Activated CD4-positive, alpha-beta T cell treated with anti-CD3 and anti-CD28 coated beads for 36 hours (primary cell): ENCODE measurements at regions of chr11 and their contacts with region 1.

Region 1: DNA sequence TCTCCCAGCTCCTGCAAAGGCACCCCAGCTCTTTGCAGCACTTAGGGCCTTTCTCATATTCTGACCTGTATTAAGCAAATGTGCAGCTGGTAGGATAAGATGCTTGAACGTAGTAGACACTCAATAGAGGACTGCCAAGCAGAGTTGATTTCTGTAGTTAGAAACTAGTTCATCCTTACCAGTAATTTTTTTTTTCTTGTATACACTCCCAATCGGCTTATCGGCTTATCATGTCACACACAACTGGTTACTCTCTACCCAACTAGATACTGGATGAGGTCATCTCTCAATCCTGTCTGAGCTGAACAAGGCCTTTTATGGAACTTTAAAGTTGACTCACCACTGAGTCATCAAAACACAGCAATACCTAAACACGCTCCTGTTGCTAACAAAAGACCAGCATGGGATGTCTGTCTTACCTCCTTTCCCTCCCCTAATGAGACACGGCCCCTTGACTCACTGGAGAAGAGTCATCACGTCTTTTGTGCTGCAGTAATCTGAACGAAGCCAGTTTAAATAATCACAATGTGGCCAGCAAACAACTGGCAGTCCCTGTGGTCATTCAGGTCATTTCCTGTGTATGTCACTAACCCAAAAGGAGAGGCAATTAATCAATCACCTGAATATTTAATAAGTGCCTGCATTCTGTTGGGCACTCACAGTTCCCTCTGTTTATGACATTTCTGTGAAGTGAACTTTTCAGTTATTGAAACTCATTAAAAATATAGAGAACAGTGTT is 7.5 kb upstream of the WEE1 start:
- DNase-seq: peak; percentile 77
- ATAC-seq: peak; percentile 97
- H3K4me3 Mint-ChIP-seq: no peak overlapping the region
- H3K27ac Mint-ChIP-seq: peak overlapping the region; percentile 81
- H3K4me1 Mint-ChIP-seq: peaks cover 28% of the 10 kb centered on the region
- H3K27me3 Mint-ChIP-seq: peaks cover 3% of the 10 kb centered on the region

Region 2: GRCh38 chr11:8328848-8329330 is 1237.1 kb before region 1 on chr11:
- CTCF ChIA-PET with region 1: no interaction called
- POLR2A ChIA-PET with region 1: no interaction called
- intact Hi-C with region 1: no loop called
- DNase-seq: peak; percentile 92
- ATAC-seq: peak; percentile 99
- H3K4me3 Mint-ChIP-seq: no peak overlapping the region
- H3K27ac Mint-ChIP-seq: no peak overlapping the region
- H3K4me1 Mint-ChIP-seq: peaks cover 3% of the 10 kb centered on the region
- H3K27me3 Mint-ChIP-seq: peaks cover 8% of the 10 kb centered on the region

Region 3: DNA sequence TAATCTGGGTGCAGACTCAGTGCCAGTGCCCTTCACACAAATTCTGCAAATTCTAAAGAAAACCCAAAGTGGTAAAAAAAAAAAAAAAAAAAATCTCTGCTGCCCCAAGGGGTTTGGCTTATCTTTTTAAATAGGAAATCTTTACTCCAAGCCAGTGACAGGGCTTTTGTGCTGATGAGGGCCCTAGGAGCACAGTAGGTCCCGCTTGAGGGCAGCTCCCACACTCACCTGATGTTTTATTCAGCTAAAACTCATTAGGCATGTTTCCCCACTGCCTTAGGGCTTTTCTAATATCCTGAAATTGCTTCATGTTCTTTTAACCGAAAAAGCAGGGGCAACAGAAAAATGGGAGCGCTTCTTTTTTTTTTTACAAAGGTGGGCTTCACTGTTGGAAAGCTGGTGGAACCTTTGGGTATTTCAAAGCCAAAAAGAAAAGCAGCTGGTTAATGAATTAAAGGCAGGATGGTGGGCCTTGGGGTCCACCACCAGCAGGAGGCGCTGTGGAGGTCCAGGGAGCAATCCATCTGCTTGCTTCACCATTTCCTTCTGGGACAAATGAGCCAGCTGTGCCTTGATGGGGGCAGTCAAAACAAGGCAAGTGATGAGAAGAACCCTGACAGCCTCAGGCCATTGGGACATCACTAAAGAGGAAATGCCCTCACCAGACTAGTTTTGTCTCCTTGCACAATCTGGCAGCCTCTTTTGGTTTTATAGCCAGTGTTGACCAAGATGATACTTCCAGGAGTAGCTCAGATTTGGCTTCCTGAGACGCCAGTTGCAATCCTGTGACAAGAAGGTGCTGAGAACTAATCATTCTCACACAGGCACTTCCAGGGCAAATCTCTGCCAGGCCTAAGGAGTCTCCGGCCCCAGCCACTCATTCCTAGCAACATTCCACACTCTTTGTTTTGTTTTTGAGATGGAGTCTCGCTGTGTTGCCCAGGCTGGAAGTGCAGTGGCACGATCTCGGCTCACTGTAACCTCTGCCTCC is 30.9 kb before region 1 on chr11:
- CTCF ChIA-PET with region 1: interaction called, 14 read pairs
- POLR2A ChIA-PET with region 1: no interaction called
- intact Hi-C with region 1: loop called in 1 of 2 experiments (anchors 5 kb)
- DNase-seq: peak; percentile 91
- ATAC-seq: peak; percentile 71
- H3K4me3 Mint-ChIP-seq: no peak overlapping the region
- H3K27ac Mint-ChIP-seq: no peak overlapping the region
- H3K4me1 Mint-ChIP-seq: no peaks in the 10 kb centered on the region
- H3K27me3 Mint-ChIP-seq: no peaks in the 10 kb centered on the region

Region 4: GRCh38 chr11:9601037-9601875 is 35.3 kb after region 1 on chr11:
- CTCF ChIA-PET with region 1: interaction called, 4 read pairs
- POLR2A ChIA-PET with region 1: interaction called, 7 read pairs
- intact Hi-C with region 1: loop called in 1 of 2 experiments (anchors 2 kb)
- DNase-seq: peak; percentile 86
- ATAC-seq: peak; percentile 89
- H3K4me3 Mint-ChIP-seq: peak overlapping the region; percentile 65
- H3K27ac Mint-ChIP-seq: peak overlapping the region; percentile 91
- H3K4me1 Mint-ChIP-seq: peaks cover 25% of the 10 kb centered on the region
- H3K27me3 Mint-ChIP-seq: no peaks in the 10 kb centered on the region